ENCODE measurements at regions of chr19 and their contacts with region 1.

Region 1: DNA sequence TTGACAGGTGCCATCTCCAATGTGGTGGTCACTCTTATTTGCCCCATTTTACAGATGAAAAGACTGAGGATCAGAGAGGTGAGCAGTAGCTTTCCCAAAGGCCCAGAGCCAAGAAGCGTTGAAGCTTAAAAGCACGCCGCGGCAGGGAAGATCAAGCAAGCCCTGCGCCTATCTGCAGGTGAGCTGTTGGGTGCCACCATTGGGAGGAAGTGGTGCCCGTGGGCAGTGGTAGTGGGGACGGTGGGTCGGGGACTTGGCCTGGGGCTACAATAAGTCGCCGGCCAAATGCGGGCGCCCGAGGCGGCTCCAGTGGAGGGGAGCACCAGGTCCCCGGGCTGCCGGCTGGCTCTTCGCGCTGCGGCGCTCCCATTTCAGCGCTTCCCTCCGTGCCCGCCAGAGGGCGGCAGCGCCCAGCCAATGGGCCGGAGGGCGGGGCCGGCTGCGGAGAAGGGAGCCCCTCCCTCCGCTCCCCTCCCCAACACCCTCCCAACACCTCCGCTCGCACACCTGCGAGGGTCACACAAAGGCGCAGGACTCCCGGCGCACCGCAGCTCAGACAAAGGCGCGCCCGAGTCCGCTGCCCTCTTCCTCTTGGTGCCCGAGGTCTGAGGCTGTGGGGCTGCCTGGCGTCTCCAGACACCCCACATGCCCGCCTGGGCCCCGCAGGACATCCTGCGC is 744 bp upstream of the POU2F2 start:
- DNase-seq: peak; percentile 46 to 89 (median 83)
- ATAC-seq: peak; percentile 64 to 84
- H3K4me3 ChIP-seq: peak overlapping the region; percentile 3
- H3K27ac ChIP-seq: no peak overlapping the region
- H3K4me1 ChIP-seq: no peaks in the 10 kb centered on the region
- H3K27me3 ChIP-seq: no peaks in the 10 kb centered on the region

Region 2: DNA sequence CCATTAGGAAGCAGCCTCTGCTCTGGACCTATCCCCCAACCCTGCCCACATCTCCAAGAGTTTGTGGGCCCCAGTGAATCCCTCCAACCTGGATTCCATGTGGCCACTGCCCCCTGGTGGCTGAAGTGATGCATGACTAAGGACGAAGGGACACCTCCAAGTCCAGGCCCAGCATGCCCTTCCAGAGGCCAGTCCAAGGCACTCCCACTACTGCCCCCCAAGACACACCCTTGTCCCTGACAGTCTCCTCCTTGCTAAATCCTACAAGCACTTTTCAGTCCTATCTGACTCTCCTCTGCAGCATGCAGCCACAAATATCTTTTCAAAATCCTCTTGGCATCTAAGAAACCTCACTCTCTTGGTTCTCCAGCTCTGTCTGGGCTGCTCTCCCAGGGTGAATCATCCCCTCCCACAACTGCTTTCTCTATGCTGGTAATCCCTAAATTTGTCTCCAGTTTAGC is 51.4 kb after region 1 on chr19:
- intact Hi-C with region 1: loop called (anchors 5 to 10 kb)
- DNase-seq: peak; percentile 75 to 87 (median 81)
- ATAC-seq: peak; percentile 78 to 80
- H3K4me3 ChIP-seq: no peak overlapping the region
- H3K27ac ChIP-seq: no peak overlapping the region
- H3K4me1 ChIP-seq: no peaks in the 10 kb centered on the region
- H3K27me3 ChIP-seq: no peaks in the 10 kb centered on the region

Region 3: GRCh38 chr19:42325273-42325895 is 192.4 kb after region 1 on chr19 and contains the start of gene MEGF8:
- intact Hi-C with region 1: loop called in 2 of 4 experiments (anchors 2 to 5 kb)
- DNase-seq: peak; percentile 99
- ATAC-seq: peak; percentile 98
- H3K4me3 ChIP-seq: peak within 1 kb of the TSS; percentile 61
- H3K27ac ChIP-seq: peak within 1 kb of the TSS; percentile 23
- H3K4me1 ChIP-seq: no peaks in the 10 kb centered on the region
- H3K27me3 ChIP-seq: no peaks in the 10 kb centered on the region
- total RNA-seq, gene MEGF8: 28.6 to 36.3 (median 32.4) TPM

Region 4: GRCh38 chr19:42396381-42397262 is 263.6 kb after region 1 on chr19:
- intact Hi-C with region 1: loop called in 1 of 4 experiments (anchors 10 kb)
- DNase-seq: peak; percentile 98 to 100 (median 99)
- ATAC-seq: peak; percentile 97 to 98
- H3K4me3 ChIP-seq: peak overlapping the region; percentile 73
- H3K27ac ChIP-seq: peak overlapping the region; percentile 66
- H3K4me1 ChIP-seq: peaks cover 5% of the 10 kb centered on the region
- H3K27me3 ChIP-seq: no peaks in the 10 kb centered on the region

Measured in right cardiac atrium (tissue), 5 donors.